ENCODE measurements at regions of chr1 and their contacts with region 1.

Region 1: GRCh38 chr1:28877132-28877781 is 37.1 kb upstream of the EPB41 start:
- DNase-seq: no peak
- H3K4me3 ChIP-seq: no peak overlapping the region
- H3K27ac ChIP-seq: no peak overlapping the region
- H3K4me1 ChIP-seq: peaks cover under 1 to 20% (median 6%) of the 10 kb centered on the region in 3 donors
- H3K27me3 ChIP-seq: peaks cover 0 to 14% (median 0%) of the 10 kb centered on the region in 4 donors
- CTCF ChIP-seq: peak; percentile 90 to 95 (median 94)
- POLR2A ChIP-seq: no peak

Region 2: GRCh38 chr1:28789412-28789811 is 87.8 kb before region 1 on chr1:
- intact Hi-C with region 1: loop called (anchors 5 kb)
- DNase-seq: no peak
- H3K4me3 ChIP-seq: no peak overlapping the region
- H3K27ac ChIP-seq: no peak overlapping the region
- H3K4me1 ChIP-seq: peaks cover 0 to 7% (median 0%) of the 10 kb centered on the region in 3 donors
- H3K27me3 ChIP-seq: no peaks in the 10 kb centered on the region
- CTCF ChIP-seq: no peak
- POLR2A ChIP-seq: no peak

Region 3: GRCh38 chr1:29017235-29017634 is 140.0 kb after region 1 on chr1:
- intact Hi-C with region 1: no loop called
- DNase-seq: no peak
- H3K4me3 ChIP-seq: no peak overlapping the region
- H3K27ac ChIP-seq: no peak overlapping the region
- H3K4me1 ChIP-seq: no peaks in the 10 kb centered on the region
- H3K27me3 ChIP-seq: no peaks in the 10 kb centered on the region
- CTCF ChIP-seq: no peak
- POLR2A ChIP-seq: no peak

Region 4: GRCh38 chr1:29033829-29034466 is 156.7 kb after region 1 on chr1:
- intact Hi-C with region 1: loop called (anchors 5 kb)
- DNase-seq: no peak
- H3K4me3 ChIP-seq: no peak overlapping the region
- H3K27ac ChIP-seq: no peak overlapping the region
- H3K4me1 ChIP-seq: no peaks in the 10 kb centered on the region
- H3K27me3 ChIP-seq: no peaks in the 10 kb centered on the region
- CTCF ChIP-seq: peak; percentile 44 to 83 (median 68)
- POLR2A ChIP-seq: no peak

Region 5: GRCh38 chr1:29202584-29203340 is 325.5 kb after region 1 on chr1:
- intact Hi-C with region 1: loop called (anchors 5 kb)
- DNase-seq: peak; percentile 73
- H3K4me3 ChIP-seq: no peak overlapping the region
- H3K27ac ChIP-seq: peak overlapping the region; percentile 77 to 89 (median 86)
- H3K4me1 ChIP-seq: peaks cover 9 to 24% (median 10%) of the 10 kb centered on the region in 3 donors
- H3K27me3 ChIP-seq: no peaks in the 10 kb centered on the region
- CTCF ChIP-seq: peak; percentile 96 to 99 (median 98)
- POLR2A ChIP-seq: no peak

Measured in esophagus squamous epithelium (tissue), 5 donors.